ENCODE measurements at regions of chr3 and their contacts with region 1.

Region 1: DNA sequence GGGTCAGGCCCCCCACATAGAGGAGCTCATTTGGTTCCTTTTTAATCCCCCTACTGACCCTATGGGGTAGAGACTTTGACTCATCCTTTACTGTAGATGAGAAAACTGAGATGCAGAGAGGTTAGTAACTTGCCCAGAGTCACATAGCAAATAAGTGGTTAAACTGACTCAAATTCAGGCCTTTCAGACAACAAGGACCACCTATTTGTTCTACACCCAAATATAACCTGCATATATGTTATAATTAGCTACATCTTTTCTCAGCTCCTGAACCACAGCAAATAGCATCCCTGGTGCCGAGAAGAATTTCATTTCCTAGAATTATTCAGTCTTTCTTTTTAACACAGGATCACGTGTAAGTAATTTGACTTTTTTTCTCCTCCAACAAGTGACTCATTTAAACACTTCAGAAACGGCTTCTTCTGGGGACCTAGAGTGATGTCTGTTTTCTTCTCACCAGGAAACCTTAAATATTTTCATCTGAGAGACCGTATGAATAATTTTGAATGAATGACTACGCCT is 57.4 kb downstream of the MGLL start:
- DNase-seq: no peak
- H3K4me3 ChIP-seq: no peak overlapping the region
- H3K27ac ChIP-seq: no peak overlapping the region; a peak in 1 of 4 replicates
- H3K4me1 ChIP-seq: peaks cover 2 to 12% of the 10 kb centered on the region in 2 experiments; a peak in 3 of 4 replicates
- H3K27me3 ChIP-seq: no peaks in the 10 kb centered on the region
- CTCF ChIP-seq: no peak
- EP300 ChIP-seq: no peak
- RAD21 ChIP-seq: no peak

Region 2: GRCh38 chr3:127389420-127389819 is 375.5 kb before region 1 on chr3:
- CTCF ChIA-PET with region 1: no interaction called
- POLR2A ChIA-PET with region 1: no interaction called
- DNase-seq: no peak
- H3K4me3 ChIP-seq: no peak overlapping the region
- H3K27ac ChIP-seq: no peak overlapping the region
- H3K4me1 ChIP-seq: peaks cover 0 to 4% of the 10 kb centered on the region in 2 experiments; a peak in 1 of 4 replicates
- H3K27me3 ChIP-seq: no peaks in the 10 kb centered on the region
- CTCF ChIP-seq: no peak
- EP300 ChIP-seq: no peak
- RAD21 ChIP-seq: no peak

Region 3: DNA sequence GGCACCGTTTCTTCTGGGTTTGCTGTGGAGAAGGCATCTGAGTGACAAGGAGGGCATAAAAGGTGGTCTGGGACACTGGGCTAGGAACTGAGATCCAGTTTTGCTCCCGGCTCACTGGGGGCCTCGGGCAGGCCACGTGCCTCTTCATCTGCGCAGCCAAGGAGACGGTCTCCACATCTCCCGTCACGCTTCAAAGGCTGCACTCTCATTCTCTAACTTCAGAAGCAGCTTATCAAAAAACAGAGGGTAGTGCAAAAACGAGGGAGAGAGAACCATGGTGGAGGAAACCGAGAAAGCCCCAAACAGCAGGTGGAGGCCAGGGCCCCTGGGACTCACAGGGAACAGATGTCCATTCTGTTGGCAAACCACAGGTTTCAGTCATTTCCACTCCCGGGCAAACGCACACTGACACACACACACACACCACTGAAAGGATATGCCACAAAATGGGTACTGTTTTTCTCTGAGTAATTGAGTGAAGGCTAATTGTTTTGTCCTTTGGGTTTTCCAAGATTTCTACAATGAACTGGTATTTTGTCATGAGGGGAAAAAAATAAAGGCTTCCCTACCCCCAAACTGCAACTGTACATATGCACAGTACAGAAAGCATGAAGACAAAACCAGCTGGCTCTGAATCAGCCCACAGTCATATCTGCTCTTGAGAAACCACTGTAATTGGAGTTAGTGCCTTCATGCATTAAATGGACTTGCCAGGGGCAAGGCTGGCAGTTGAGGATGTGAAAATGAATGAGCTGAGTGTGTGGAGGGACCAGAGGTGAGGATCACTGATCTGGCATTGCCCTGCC is 14.5 kb before region 1 on chr3:
- CTCF ChIA-PET with region 1: interaction called, 10 read pairs
- POLR2A ChIA-PET with region 1: no interaction called
- DNase-seq: peak; percentile 52
- H3K4me3 ChIP-seq: no peak overlapping the region
- H3K27ac ChIP-seq: peak overlapping the region in 1 of 2 experiments; percentile 83; a peak in 2 of 4 replicates
- H3K4me1 ChIP-seq: peaks cover 31 to 44% of the 10 kb centered on the region in 2 experiments; a peak in 2 of 4 replicates
- H3K27me3 ChIP-seq: no peaks in the 10 kb centered on the region
- CTCF ChIP-seq: no peak
- EP300 ChIP-seq: peak in 1 of 2 experiments; percentile 51; a peak in 2 of 4 replicates
- RAD21 ChIP-seq: no peak

Region 4: GRCh38 chr3:127831723-127832172 is 66.8 kb after region 1 on chr3:
- CTCF ChIA-PET with region 1: no interaction called
- POLR2A ChIA-PET with region 1: no interaction called
- DNase-seq: peak; percentile 67
- H3K4me3 ChIP-seq: no peak overlapping the region
- H3K27ac ChIP-seq: no peak overlapping the region
- H3K4me1 ChIP-seq: no peaks in the 10 kb centered on the region
- H3K27me3 ChIP-seq: no peaks in the 10 kb centered on the region
- CTCF ChIP-seq: peak; percentile 49
- EP300 ChIP-seq: no peak
- RAD21 ChIP-seq: peak; percentile 73